ENCODE measurements at regions of chr6 and their contacts with region 1.

Region 1: DNA sequence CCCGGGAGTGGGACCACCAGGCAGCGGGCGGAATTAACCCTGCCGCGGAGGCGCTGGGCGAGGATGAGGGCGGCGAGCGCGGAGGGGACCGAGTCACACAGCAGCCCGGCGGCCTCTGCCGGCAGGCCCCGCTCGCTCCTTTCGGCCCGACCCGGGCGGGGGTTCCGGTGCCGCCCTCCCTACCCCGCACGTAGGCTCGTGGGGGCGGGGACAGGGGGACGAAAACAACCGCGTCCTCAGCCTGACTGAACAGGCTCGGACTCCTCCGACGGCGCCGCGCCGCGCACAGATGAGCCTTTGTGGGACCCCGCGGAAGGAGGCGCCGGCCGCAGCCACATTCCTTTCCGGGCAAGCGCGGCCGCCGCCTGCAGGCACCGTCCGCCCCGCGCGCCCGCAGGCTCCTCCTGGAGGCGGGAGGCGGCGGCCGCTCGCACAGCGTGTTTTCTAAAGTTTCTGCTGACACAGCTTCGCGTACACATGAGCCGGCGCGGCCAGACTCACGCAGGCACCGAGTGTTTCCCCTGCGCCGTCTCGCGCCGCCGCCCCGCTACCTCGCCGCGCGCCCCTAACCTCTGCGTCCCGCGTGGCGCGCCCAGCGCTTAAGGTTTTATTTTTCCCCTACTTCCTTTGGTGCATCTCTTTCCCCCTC is 244.3 kb downstream of the ARID1B start:
- DNase-seq: peak; percentile 90 to 92
- ATAC-seq: peak; percentile 74 to 92 (median 80)
- H3K4me3 ChIP-seq: peak overlapping the region; percentile 84
- H3K4me3 Mint-ChIP-seq: peak overlapping the region; percentile 95
- H3K27ac ChIP-seq: peak overlapping the region; percentile 97
- H3K27ac Mint-ChIP-seq: peak overlapping the region; percentile 96
- H3K4me1 ChIP-seq: peaks cover 6% of the 10 kb centered on the region
- H3K4me1 Mint-ChIP-seq: peaks cover 40 to 43% of the 10 kb centered on the region in 2 donors
- H3K27me3 ChIP-seq: no peaks in the 10 kb centered on the region
- H3K27me3 Mint-ChIP-seq: no peaks in the 10 kb centered on the region
- CTCF ChIP-seq: peak; percentile 39

Region 2: GRCh38 chr6:156564127-156564806 is 457.2 kb before region 1 on chr6:
- intact Hi-C with region 1: loop called (anchors 10 kb)
- DNase-seq: peak; percentile 71 to 86
- ATAC-seq: peak; percentile 88 to 99 (median 99)
- H3K4me3 ChIP-seq: no peak overlapping the region
- H3K4me3 Mint-ChIP-seq: no peak overlapping the region
- H3K27ac ChIP-seq: no peak overlapping the region
- H3K27ac Mint-ChIP-seq: no peak overlapping the region
- H3K4me1 ChIP-seq: peaks cover 4% of the 10 kb centered on the region
- H3K4me1 Mint-ChIP-seq: peaks cover 0 to 5% of the 10 kb centered on the region in 2 donors
- H3K27me3 ChIP-seq: peaks cover 4% of the 10 kb centered on the region
- H3K27me3 Mint-ChIP-seq: peaks cover 41 to 46% of the 10 kb centered on the region in 2 donors
- CTCF ChIP-seq: peak; percentile 92

Region 3: GRCh38 chr6:156776840-156777576 is 244.5 kb before region 1 on chr6 and contains the start of gene ARID1B:
- intact Hi-C with region 1: loop called (anchors 2 kb)
- DNase-seq: peak; percentile 79 to 91
- ATAC-seq: peak; percentile 56 to 78 (median 72)
- H3K4me3 ChIP-seq: peak within 1 kb of the TSS; percentile 89
- H3K4me3 Mint-ChIP-seq: peak within 1 kb of the TSS; percentile 97
- H3K27ac ChIP-seq: peak within 1 kb of the TSS; percentile 90
- H3K27ac Mint-ChIP-seq: peak within 1 kb of the TSS; percentile 92
- H3K4me1 ChIP-seq: peaks cover 11% of the 10 kb centered on the region
- H3K4me1 Mint-ChIP-seq: peaks cover 27 to 38% of the 10 kb centered on the region in 2 donors
- H3K27me3 ChIP-seq: no peaks in the 10 kb centered on the region
- H3K27me3 Mint-ChIP-seq: peaks cover 0 to 2% of the 10 kb centered on the region in 2 donors
- CTCF ChIP-seq: no peak
- total RNA-seq, gene ARID1B: 180 to 201 (median 189) TPM

Region 4: GRCh38 chr6:157143171-157143889 is 121.9 kb after region 1 on chr6:
- intact Hi-C with region 1: loop called (anchors 2 kb)
- DNase-seq: peak; percentile 69 to 75
- ATAC-seq: peak; percentile 84 to 96 (median 90)
- H3K4me3 ChIP-seq: no peak overlapping the region
- H3K4me3 Mint-ChIP-seq: peak overlapping the region; percentile 69
- H3K27ac ChIP-seq: peak overlapping the region; percentile 34
- H3K27ac Mint-ChIP-seq: peak overlapping the region; percentile 88 to 93
- H3K4me1 ChIP-seq: peaks cover 42% of the 10 kb centered on the region
- H3K4me1 Mint-ChIP-seq: peaks cover 52 to 59% of the 10 kb centered on the region in 2 donors
- H3K27me3 ChIP-seq: no peaks in the 10 kb centered on the region
- H3K27me3 Mint-ChIP-seq: no peaks in the 10 kb centered on the region
- CTCF ChIP-seq: no peak

Region 5: GRCh38 chr6:157274471-157275226 is 253.2 kb after region 1 on chr6:
- intact Hi-C with region 1: loop called (anchors 5 kb)
- DNase-seq: peak; percentile 82 to 93
- ATAC-seq: peak; percentile 89 to 97 (median 90)
- H3K4me3 ChIP-seq: peak overlapping the region; percentile 78
- H3K4me3 Mint-ChIP-seq: peak overlapping the region; percentile 96
- H3K27ac ChIP-seq: peak overlapping the region; percentile 73
- H3K27ac Mint-ChIP-seq: peak overlapping the region; percentile 88 to 94
- H3K4me1 ChIP-seq: peaks cover 17% of the 10 kb centered on the region
- H3K4me1 Mint-ChIP-seq: peaks cover 7 to 19% of the 10 kb centered on the region in 2 donors
- H3K27me3 ChIP-seq: no peaks in the 10 kb centered on the region
- H3K27me3 Mint-ChIP-seq: peaks cover 0 to 4% of the 10 kb centered on the region in 2 donors
- CTCF ChIP-seq: peak; percentile 86

Region 6: GRCh38 chr6:157358287-157358686 is 336.8 kb after region 1 on chr6:
- intact Hi-C with region 1: no loop called
- DNase-seq: no peak
- ATAC-seq: no peak
- H3K4me3 ChIP-seq: no peak overlapping the region
- H3K4me3 Mint-ChIP-seq: no peak overlapping the region
- H3K27ac ChIP-seq: no peak overlapping the region
- H3K27ac Mint-ChIP-seq: no peak overlapping the region
- H3K4me1 ChIP-seq: no peaks in the 10 kb centered on the region
- H3K4me1 Mint-ChIP-seq: no peaks in the 10 kb centered on the region
- H3K27me3 ChIP-seq: peaks cover under 1% of the 10 kb centered on the region
- H3K27me3 Mint-ChIP-seq: peaks cover 7 to 22% of the 10 kb centered on the region in 2 donors
- CTCF ChIP-seq: no peak